ENCODE measurements at regions of chr7 and their contacts with region 1.

Region 1: GRCh38 chr7:97418312-97418711 is 300.8 kb downstream of the SDHAF3 start:
- DNase-seq: no peak
- H3K4me3 ChIP-seq: no peak overlapping the region
- H3K27ac ChIP-seq: no peak overlapping the region
- H3K4me1 ChIP-seq: no peaks in the 10 kb centered on the region
- H3K27me3 ChIP-seq: no peaks in the 10 kb centered on the region
- CTCF ChIP-seq: no peak

Region 2: DNA sequence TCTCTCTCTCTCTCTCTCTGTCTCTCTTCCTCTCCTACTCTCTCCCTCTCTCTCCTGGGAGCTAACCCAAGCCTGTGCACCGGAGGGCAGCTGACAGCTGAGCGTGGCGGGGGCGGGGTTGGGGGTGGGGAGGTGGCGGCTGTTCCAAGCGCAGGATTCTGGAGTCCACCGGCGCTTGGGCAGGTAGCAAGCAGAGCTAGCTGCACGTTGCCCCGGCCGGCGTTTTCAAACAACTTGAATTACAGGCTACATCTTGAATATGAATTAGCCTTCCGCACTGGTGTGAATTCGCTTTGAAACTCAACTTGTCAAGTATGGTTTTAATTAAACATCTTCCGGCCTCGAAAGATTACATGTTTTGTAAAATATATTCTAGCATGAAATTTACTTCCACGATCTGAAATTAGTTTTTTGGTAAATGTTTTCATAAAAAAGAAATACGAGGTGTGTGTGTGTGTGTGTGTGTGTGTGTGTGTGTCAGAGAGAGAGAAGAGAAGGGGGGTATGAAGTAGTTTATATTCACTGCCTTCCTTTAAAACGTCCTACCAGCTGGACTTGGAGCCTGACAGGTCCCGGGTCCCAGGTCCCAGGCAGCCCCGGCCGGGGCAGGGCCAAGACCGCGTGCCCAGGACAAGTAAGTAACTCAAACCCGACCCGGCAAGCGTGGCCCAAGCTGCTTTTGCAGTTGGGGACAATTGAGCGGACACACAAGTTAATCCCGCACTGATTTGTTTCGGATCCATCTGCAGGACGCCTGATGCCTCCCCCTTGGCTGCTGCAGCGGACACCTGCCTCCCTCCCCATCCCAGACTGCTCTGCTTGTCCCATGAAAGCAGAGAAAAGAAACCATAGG is 422.0 kb before region 1 on chr7:
- CTCF ChIA-PET with region 1: no interaction called
- dilution Hi-C with region 1: no loop called
- in situ Hi-C with region 1: no loop called
- intact Hi-C with region 1: no loop called
- DNase-seq: no peak
- H3K4me3 ChIP-seq: no peak overlapping the region
- H3K27ac ChIP-seq: no peak overlapping the region
- H3K4me1 ChIP-seq: no peaks in the 10 kb centered on the region
- H3K27me3 ChIP-seq: peaks cover 74% of the 10 kb centered on the region
- CTCF ChIP-seq: no peak

Region 3: GRCh38 chr7:97337849-97338248 is 80.5 kb before region 1 on chr7:
- CTCF ChIA-PET with region 1: no interaction called
- dilution Hi-C with region 1: loop called (anchors 5 kb)
- in situ Hi-C with region 1: no loop called
- intact Hi-C with region 1: no loop called
- DNase-seq: no peak
- H3K4me3 ChIP-seq: no peak overlapping the region
- H3K27ac ChIP-seq: no peak overlapping the region
- H3K4me1 ChIP-seq: no peaks in the 10 kb centered on the region
- H3K27me3 ChIP-seq: no peaks in the 10 kb centered on the region
- CTCF ChIP-seq: no peak